ENCODE measurements at regions of chrX and their contacts with region 1.

Region 1: DNA sequence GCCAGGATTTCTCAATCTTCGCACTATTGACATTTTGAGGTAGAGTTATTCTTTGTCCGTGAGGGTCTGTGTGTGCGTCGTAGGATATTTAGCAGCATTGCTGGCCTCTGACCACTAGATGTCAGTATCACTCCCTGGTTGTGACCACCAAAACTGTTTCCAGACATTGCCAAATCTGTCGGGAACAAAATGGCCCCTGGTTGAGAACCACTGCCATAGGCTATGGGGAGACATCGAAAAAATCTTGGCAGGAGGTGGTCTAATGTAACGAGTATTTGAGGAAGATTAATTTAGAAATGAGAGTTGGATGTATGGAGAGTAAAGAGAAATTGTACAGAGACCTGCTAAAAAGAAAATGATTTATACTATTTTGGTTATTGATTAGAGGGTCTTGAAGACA is 108.4 kb downstream of the DOCK11 start:
- DNase-seq: peak; percentile 73
- H3K4me3 Mint-ChIP-seq: peak overlapping the region; percentile 8
- H3K27ac Mint-ChIP-seq: no peak overlapping the region
- H3K4me1 Mint-ChIP-seq: peaks cover 5% of the 10 kb centered on the region
- H3K27me3 Mint-ChIP-seq: no peaks in the 10 kb centered on the region
- CTCF ChIP-seq: peak; percentile 61

Region 2: GRCh38 chrX:117996918-117997480 is 607.0 kb before region 1 on chrX:
- CTCF ChIA-PET with region 1: no interaction called
- POLR2A ChIA-PET with region 1: interaction called, 3 read pairs
- intact Hi-C with region 1: loop called (anchors 5 kb)
- DNase-seq: peak; percentile 59
- H3K4me3 Mint-ChIP-seq: no peak overlapping the region
- H3K27ac Mint-ChIP-seq: no peak overlapping the region
- H3K4me1 Mint-ChIP-seq: peaks cover 17% of the 10 kb centered on the region
- H3K27me3 Mint-ChIP-seq: no peaks in the 10 kb centered on the region
- CTCF ChIP-seq: peak; percentile 54

Region 3: GRCh38 chrX:118459494-118459893 is 144.5 kb before region 1 on chrX:
- CTCF ChIA-PET with region 1: interaction called, 109 read pairs
- POLR2A ChIA-PET with region 1: interaction called, 4 read pairs
- intact Hi-C with region 1: loop called (anchors 1 kb)
- DNase-seq: peak; percentile 51
- H3K4me3 Mint-ChIP-seq: no peak overlapping the region
- H3K27ac Mint-ChIP-seq: no peak overlapping the region
- H3K4me1 Mint-ChIP-seq: no peaks in the 10 kb centered on the region
- H3K27me3 Mint-ChIP-seq: no peaks in the 10 kb centered on the region
- CTCF ChIP-seq: peak; percentile 46

Region 4: GRCh38 chrX:118495061-118495921 is 108.7 kb before region 1 on chrX and contains the start of gene DOCK11:
- CTCF ChIA-PET with region 1: interaction called, 5 read pairs
- POLR2A ChIA-PET with region 1: no interaction called
- intact Hi-C with region 1: loop called (anchors 1 kb)
- DNase-seq: peak; percentile 63
- H3K4me3 Mint-ChIP-seq: peak within 1 kb of the TSS; percentile 74
- H3K27ac Mint-ChIP-seq: no peak within 1 kb of the TSS
- H3K4me1 Mint-ChIP-seq: no peaks in the 10 kb centered on the region
- H3K27me3 Mint-ChIP-seq: no peaks in the 10 kb centered on the region
- CTCF ChIP-seq: no peak
- total RNA-seq, gene DOCK11: 1.9 and 3.1 TPM in 2 replicates

Region 5: GRCh38 chrX:118530219-118530911 is 73.6 kb before region 1 on chrX:
- CTCF ChIA-PET with region 1: interaction called, 10 read pairs
- POLR2A ChIA-PET with region 1: no interaction called
- intact Hi-C with region 1: no loop called
- DNase-seq: peak; percentile 17
- H3K4me3 Mint-ChIP-seq: no peak overlapping the region
- H3K27ac Mint-ChIP-seq: no peak overlapping the region
- H3K4me1 Mint-ChIP-seq: peaks cover 6% of the 10 kb centered on the region
- H3K27me3 Mint-ChIP-seq: peaks cover 19% of the 10 kb centered on the region
- CTCF ChIP-seq: no peak

Region 6: DNA sequence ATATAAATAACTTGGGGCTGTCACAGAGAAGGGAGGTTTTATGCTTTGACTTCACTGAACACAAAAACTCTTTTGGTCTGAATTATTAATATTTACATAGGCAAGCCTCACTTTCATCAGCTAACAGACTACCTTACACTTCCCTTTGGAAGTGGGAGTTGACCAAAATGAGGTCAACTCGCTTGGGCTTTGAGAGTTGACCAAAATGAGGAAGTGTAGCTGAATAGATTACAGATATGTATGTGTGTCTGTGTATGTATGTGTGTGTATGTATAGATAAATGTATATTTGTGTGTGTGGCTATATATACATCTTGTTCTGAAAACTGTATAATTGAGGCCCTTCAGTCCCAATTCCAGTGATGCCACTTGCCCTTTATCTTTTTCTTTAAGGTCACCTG is 10.2 kb after region 1 on chrX:
- CTCF ChIA-PET with region 1: interaction called, 17 read pairs
- POLR2A ChIA-PET with region 1: interaction called, 3 read pairs
- intact Hi-C with region 1: no loop called
- DNase-seq: no peak
- H3K4me3 Mint-ChIP-seq: no peak overlapping the region
- H3K27ac Mint-ChIP-seq: no peak overlapping the region
- H3K4me1 Mint-ChIP-seq: no peaks in the 10 kb centered on the region
- H3K27me3 Mint-ChIP-seq: peaks cover 22% of the 10 kb centered on the region
- CTCF ChIP-seq: no peak

Region 7: GRCh38 chrX:118644378-118644777 is 40.4 kb after region 1 on chrX:
- CTCF ChIA-PET with region 1: interaction called, 7 read pairs
- POLR2A ChIA-PET with region 1: no interaction called
- intact Hi-C with region 1: loop called (anchors 2 kb)
- DNase-seq: peak; percentile 50
- H3K4me3 Mint-ChIP-seq: no peak overlapping the region
- H3K27ac Mint-ChIP-seq: no peak overlapping the region
- H3K4me1 Mint-ChIP-seq: no peaks in the 10 kb centered on the region
- H3K27me3 Mint-ChIP-seq: peaks cover 15% of the 10 kb centered on the region
- CTCF ChIP-seq: peak; percentile 47

Region 8: DNA sequence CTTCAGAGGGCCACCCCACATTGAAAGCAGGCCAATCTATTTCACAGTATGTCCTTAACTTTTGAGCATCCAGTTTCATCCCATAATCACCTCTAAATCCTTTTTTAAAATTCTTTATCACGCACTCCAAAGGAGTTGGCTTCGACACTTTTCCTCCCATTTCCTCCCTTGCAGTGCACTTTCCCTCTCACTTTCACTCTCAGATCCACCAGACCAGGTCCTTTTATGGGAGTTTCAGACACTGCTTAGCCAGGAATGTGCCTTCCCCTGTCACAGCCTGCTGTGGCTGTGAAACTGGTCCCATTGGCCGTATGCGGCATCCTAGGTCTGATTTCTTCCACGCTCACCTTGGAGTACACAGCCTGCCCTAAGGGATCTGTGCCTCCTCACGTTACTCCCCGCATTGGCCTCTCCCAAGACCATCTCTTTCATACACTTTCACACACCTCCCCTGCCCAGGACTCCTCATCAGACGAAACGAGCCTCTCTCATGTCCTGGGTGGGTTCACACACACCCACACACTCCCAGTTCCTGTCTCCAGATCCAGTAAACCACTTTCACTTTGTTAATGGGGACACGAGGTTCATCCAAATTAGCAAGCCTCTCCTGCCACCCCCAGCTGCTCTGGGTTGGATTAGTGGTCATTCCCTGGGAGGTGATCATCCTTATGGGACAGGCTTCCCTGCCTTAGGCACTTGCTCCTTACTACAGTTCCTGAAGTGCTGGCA is 1483.5 kb after region 1 on chrX:
- CTCF ChIA-PET with region 1: no interaction called
- POLR2A ChIA-PET with region 1: no interaction called
- intact Hi-C with region 1: no loop called
- DNase-seq: no peak
- H3K4me3 Mint-ChIP-seq: peak overlapping the region; percentile 16
- H3K27ac Mint-ChIP-seq: no peak overlapping the region
- H3K4me1 Mint-ChIP-seq: peaks cover 8% of the 10 kb centered on the region
- H3K27me3 Mint-ChIP-seq: peaks cover 45% of the 10 kb centered on the region
- CTCF ChIP-seq: no peak

Measured in MCF 10A (cell line).